ENCODE measurements at regions of chr4 and their contacts with region 1.

Region 1: GRCh38 chr4:38062088-38062893 is 102.1 kb downstream of the PTTG2 start:
- DNase-seq: peak; percentile 82
- H3K4me3 ChIP-seq: peak overlapping the region; percentile 69
- H3K27ac ChIP-seq: no peak overlapping the region
- H3K4me1 ChIP-seq: no peaks in the 10 kb centered on the region
- H3K27me3 ChIP-seq: no peaks in the 10 kb centered on the region

Region 2: DNA sequence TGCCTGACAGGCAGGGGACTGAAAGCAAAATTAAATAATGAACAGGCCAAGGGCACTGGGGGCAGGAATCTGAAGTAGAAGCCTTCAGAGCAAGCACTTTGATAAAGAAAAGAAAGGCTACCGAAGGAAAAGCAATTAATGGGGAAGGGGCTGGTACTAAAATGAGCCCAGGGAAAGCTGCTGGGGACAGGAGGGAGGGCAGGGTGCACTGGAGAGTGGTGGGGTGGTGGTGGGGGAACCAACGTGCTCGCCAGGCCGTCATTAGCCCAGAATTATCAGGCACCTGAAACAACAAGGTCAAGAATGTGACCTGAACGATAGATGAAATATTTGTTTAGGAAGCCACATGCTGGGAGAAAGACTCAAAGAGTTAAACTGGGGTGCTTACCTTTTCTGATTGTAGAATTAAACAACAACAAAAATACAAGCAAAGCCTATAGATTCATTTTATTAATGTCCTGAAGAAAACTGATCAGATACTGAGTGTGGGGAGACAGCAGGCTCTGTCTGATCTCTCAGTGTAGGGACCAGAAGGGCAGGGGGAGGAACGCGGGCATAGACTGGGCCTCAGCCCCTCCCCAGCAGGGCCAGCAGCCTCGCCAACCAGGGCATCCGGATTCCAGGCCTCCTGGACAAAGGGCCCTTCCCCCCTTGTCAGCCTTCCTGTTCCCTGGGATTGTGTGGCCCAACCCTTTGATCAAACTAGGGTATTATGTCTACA is 362.0 kb after region 1 on chr4:
- in situ Hi-C with region 1: no loop called
- DNase-seq: no peak
- H3K4me3 ChIP-seq: no peak overlapping the region
- H3K27ac ChIP-seq: no peak overlapping the region
- H3K4me1 ChIP-seq: no peaks in the 10 kb centered on the region
- H3K27me3 ChIP-seq: peaks cover 8% of the 10 kb centered on the region

Region 3: GRCh38 chr4:38523524-38524448 is 461.5 kb after region 1 on chr4:
- in situ Hi-C with region 1: loop called (anchors 25 kb)
- DNase-seq: no peak
- H3K4me3 ChIP-seq: no peak overlapping the region
- H3K27ac ChIP-seq: no peak overlapping the region
- H3K4me1 ChIP-seq: no peaks in the 10 kb centered on the region
- H3K27me3 ChIP-seq: 0 out of 2 replicates have a peak, but pooled peaks cover 4% of the 10 kb centered on the region

Region 4: DNA sequence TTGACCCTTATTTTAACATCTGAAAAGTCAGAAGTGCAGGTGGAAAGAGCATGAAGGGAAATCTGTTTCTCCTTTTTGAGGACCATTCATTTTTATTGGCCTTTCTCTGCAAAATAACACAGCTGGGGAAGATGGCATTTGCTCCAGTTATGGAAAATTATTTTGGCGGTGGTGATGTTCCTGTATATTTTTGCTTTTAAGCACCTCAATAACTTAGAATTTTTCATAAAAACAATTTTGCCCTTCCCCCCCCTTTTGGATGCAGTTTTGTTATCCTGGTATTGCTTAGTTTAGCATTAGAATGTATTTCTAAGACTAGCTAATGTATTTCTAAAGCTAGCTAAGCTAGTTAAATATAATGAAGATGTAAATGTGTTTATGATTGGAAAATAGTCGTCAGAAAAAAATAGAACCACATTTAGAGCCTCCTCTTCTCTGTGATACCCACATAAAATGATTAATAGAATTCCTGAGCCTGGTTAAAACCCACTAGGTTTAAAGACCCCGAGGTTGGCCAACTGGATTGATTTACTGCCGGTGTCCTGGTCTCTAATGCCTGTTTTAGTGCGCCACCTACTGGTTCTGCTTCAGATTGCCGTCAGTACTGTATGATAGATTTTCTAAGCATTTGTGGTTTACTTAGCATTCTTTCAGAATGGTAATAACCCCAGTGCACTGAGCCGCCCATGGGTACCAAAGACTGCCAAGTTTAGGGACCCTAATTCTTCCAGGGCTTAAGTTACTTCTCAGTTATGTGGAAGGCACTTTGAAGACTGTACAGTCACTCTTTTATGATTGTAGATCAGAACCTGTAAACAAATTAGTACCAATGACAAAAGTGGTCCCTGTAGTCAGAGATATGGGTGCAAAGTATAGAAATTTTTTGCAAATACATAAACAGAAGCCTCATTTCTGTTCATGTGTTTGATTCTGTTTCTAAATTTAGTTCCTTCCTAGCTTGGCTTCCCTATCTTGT is 613.1 kb after region 1 on chr4:
- in situ Hi-C with region 1: loop called (anchors 10 kb)
- DNase-seq: peak; percentile 80
- H3K4me3 ChIP-seq: 0 out of 2 replicates have a peak overlapping the region, but pooled peaks have one; percentile 18
- H3K27ac ChIP-seq: peak overlapping the region; percentile 27
- H3K4me1 ChIP-seq: peaks cover 86% of the 10 kb centered on the region
- H3K27me3 ChIP-seq: no peaks in the 10 kb centered on the region